ENCODE measurements at regions of chr17 and their contacts with region 1.

Region 1: DNA sequence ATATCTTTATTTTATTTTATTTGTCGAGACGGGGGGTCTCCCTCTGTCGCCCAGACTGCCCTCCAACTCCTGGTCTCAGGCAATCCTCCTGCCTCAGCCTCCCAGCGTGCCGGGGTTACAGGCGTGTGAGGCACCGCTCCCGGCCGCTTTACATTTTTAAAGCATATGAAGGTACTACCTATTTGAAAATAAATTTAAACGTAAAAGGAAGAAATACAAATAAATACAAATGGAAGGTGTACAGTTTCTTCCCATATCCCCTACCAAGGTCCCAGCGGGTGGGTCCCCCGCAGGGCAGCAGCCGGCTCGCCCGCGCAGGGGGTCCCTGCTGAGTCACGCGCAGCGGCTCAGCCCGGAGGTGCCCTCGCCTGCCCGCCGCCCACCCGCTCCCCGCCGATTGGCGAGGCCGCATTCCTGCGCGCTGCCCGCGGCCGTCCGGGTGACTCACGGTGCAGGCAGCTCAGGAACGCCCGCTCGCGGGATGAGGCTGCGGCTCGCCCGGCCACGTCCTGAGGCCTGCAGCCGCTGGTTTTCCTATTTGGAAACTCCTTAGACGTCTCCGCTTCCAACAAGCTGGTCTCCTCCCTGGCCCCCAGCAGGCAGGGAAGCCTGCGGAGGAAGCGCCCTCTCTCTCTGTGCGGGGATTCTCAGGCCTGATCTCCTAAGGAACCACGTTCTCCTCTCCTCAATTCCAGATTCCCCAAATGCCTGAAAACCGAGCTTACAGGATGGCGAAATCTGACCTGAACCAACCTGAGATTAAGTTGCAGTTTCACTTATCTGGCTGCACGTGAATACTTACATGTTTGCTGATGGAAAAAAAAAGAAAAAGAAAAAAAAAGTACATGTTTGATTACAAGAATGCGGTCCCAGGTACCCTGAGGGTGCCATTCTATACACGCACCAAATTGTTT is 54.9 kb upstream of the MAP3K14 start:
- DNase-seq: peak; percentile 84 to 92
- H3K4me3 ChIP-seq: peak overlapping the region in 3 of 4 experiments; percentile 1 to 44 (median 14); a peak in 5 of 8 replicates
- H3K27ac ChIP-seq: peak overlapping the region; percentile 79
- H3K4me1 ChIP-seq: peaks cover 8 to 28% (median 16%) of the 10 kb centered on the region in 4 experiments
- H3K27me3 ChIP-seq: no peaks in the 10 kb centered on the region
- CTCF ChIP-seq: no peak
- EP300 ChIP-seq: 0 out of 3 replicates have a peak, but pooled peaks of 1 of the 2 experiments have one; percentile 45
- POLR2A ChIP-seq: peak; percentile 50 to 53; a peak in 2 of 3 replicates
- RAD21 ChIP-seq: no peak; a peak in 1 of 4 replicates

Region 2: DNA sequence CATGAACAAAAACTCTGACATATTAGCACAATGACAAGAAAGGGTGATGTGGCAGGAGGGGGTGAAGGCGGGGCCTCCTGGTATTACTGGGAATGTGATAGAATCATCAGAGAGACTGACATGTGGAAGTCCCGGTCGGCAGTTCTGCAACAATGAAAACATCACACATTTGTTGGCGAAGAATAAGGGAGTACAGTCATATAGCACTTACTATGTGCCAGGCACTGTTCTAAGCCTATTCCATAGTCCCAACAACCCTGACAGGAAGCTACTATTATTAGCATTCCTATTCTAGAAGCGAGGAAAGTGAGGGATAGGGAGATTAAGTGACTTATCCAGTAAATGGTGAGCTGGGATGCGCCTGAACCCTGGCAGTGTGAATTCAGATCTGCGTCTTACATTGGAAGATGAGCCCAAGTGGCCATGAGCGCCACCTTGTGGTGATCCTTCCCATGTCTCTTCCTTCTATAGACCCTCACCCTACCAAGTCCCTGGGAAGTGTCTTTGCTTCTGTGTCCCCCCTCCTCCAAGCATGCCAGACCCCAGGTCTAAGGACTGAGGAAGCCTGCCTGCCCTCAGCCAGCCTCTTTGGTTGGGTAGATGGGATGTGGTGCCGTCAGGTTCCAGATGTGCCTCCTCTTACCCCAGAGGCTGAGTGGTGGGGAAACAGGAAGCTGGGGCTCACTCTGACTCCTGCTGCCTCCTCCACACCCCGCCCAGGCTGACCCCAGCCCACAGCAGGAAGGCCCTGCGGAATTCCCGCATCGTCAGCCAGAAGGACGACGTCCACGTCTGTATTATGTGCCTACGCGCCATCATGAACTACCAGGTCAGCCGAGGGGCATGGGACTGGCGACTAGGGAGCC is 136.0 kb before region 1 on chr17:
- CTCF ChIA-PET with region 1: interaction called, 12 read pairs
- POLR2A ChIA-PET with region 1: interaction called, 3 read pairs
- DNase-seq: peak; percentile 80 to 92
- H3K4me3 ChIP-seq: 0 out of 8 replicates have a peak overlapping the region, but pooled peaks of 1 of the 4 experiments have one; percentile 12
- H3K27ac ChIP-seq: no peak overlapping the region
- H3K4me1 ChIP-seq: peaks cover 3 to 20% (median 10%) of the 10 kb centered on the region in 4 experiments
- H3K27me3 ChIP-seq: peaks cover 0 to 26% (median 12%) of the 10 kb centered on the region in 4 experiments; a peak in 6 of 7 replicates
- CTCF ChIP-seq: peak; percentile 81 to 95 (median 82)
- EP300 ChIP-seq: no peak
- POLR2A ChIP-seq: no peak
- RAD21 ChIP-seq: peak; percentile 47 to 63; a peak in 3 of 4 replicates

Region 3: GRCh38 chr17:45258981-45259380 is 112.7 kb before region 1 on chr17:
- CTCF ChIA-PET with region 1: no interaction called
- POLR2A ChIA-PET with region 1: no interaction called
- DNase-seq: no peak
- H3K4me3 ChIP-seq: no peak overlapping the region
- H3K27ac ChIP-seq: no peak overlapping the region
- H3K4me1 ChIP-seq: peaks cover 4 to 19% (median 13%) of the 10 kb centered on the region in 4 experiments
- H3K27me3 ChIP-seq: peaks cover 0 to 5% (median 2%) of the 10 kb centered on the region in 4 experiments; a peak in 3 of 7 replicates
- CTCF ChIP-seq: no peak
- EP300 ChIP-seq: no peak
- POLR2A ChIP-seq: no peak
- RAD21 ChIP-seq: no peak

Region 4: DNA sequence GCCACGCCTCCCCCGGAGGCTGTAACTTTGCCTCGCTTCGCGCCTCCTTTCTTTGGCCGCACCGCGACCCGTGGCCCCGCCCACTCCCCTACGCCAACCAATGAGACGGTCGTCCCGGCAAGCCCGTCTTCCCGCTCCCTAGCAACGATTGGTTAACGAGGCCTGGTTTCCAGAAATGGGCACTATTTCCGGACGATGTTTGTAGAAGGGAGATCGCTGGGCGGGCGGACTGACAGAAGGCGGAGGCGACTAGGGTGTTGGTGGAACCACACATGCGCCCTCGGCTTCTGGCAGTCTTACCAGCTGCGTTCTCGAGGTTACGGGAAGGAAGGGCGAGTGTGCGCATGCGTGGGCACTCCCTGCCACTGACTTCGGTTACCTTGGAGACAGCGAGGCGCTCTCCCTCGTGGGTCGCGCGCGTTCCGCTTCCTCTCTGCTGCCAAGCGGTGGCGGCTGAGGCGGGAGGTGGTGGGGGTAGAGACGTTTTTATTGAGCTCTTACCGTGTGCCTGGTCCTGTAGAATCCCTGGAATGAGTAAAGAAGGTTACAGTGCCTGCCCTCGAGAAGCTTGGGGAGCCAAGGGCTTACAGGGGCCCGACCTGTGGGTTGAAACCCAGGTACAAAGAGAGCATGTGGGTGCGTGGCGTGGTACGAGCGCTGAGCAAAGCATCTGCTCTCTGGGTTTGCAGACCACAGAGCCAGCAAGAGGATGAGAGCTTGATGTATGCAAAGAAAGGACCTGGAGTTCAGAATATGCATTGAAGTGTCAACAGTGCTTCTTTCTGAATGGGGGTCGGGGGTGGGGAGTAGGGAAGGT is 54.4 kb before region 1 on chr17:
- CTCF ChIA-PET with region 1: interaction called, 6 read pairs
- POLR2A ChIA-PET with region 1: interaction called, 15 read pairs
- DNase-seq: peak; percentile 99
- H3K4me3 ChIP-seq: peak overlapping the region; percentile 49 to 84 (median 76)
- H3K27ac ChIP-seq: no peak overlapping the region; the same call in 1 of the 2 replicates
- H3K4me1 ChIP-seq: peaks cover 0 to 5% (median 3%) of the 10 kb centered on the region in 4 experiments; a peak in 6 of 7 replicates
- H3K27me3 ChIP-seq: peaks cover 0 to 2% (median 0%) of the 10 kb centered on the region in 4 experiments; a peak in 3 of 7 replicates
- CTCF ChIP-seq: no peak
- EP300 ChIP-seq: no peak
- POLR2A ChIP-seq: 0 out of 3 replicates have a peak, but pooled peaks of 1 of the 2 experiments have one; percentile 14
- RAD21 ChIP-seq: no peak; a peak in 1 of 4 replicates

Region 5: DNA sequence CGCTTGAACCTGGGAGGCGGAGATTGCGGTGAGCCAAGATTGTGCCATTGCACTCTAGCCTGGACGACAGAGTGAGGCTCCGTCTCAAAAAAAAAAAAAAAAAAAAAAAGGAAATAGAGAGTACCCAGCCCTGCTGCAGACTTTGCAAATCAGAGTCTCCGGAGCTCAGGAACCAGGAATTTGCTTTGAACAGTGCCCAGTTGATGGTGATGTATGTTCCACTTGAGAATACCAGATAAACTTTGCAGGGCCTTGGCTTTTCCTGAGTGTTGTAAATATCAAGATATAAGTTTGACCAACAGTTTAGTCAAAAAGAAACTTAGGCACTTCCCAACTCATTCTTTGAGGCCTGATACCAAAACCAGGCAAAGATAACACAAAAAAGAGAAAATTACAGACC is 24.2 kb before region 1 on chr17:
- CTCF ChIA-PET with region 1: no interaction called
- POLR2A ChIA-PET with region 1: no interaction called
- DNase-seq: no peak
- H3K4me3 ChIP-seq: no peak overlapping the region
- H3K27ac ChIP-seq: no peak overlapping the region
- H3K4me1 ChIP-seq: peaks cover 0 to 1% (median 0%) of the 10 kb centered on the region in 4 experiments; a peak in 2 of 7 replicates
- H3K27me3 ChIP-seq: no peaks in the 10 kb centered on the region
- CTCF ChIP-seq: no peak
- EP300 ChIP-seq: no peak
- POLR2A ChIP-seq: no peak
- RAD21 ChIP-seq: no peak

Region 6: DNA sequence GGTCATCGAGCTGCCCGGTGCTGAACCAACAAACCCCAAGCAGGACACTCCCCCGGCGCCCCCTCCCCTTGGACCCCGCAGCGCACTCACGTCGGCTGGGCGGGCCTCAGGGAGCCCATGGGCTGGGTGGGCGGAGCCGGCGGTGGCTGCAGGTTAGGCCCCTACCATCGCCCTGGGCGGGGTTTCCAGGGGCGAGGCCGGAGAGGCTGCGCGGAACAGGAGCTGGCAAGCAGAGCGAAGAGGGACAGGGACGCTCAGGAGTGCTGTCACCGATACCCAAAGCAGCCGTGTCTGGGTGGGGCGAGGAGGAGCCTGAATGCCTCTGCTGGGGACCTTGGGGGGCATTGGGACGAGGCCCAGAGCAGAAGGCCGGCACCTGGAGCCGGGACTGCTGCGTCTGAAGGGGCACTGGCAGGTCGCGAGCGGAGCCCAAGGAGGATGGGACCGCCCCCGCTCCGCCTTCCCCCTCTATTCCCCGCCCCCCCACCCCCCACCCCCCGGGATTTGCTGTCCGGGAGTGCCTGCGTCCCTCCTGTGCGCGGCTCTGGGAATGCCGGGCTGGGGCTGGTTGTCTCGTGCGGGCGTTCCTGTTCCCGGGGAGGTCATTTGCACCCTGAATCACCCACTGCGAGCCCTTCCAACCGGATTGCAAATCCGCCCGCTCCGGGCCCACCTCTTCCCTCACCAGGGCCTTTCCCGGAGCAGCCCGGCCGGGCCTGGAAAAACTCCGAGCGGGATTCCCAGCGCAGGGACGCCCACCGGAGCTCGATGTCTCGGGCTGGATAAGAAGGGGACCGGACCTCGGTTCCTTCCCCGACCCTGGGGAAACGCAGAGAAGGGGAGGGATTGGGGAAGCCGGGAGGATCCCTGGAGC is 60.1 kb after region 1 on chr17:
- CTCF ChIA-PET with region 1: no interaction called
- POLR2A ChIA-PET with region 1: no interaction called
- DNase-seq: peak; percentile 63 to 95
- H3K4me3 ChIP-seq: peak overlapping the region; percentile 54 to 65 (median 56)
- H3K27ac ChIP-seq: no peak overlapping the region
- H3K4me1 ChIP-seq: peaks cover 6 to 22% (median 14%) of the 10 kb centered on the region in 4 experiments
- H3K27me3 ChIP-seq: peaks cover 21 to 49% (median 43%) of the 10 kb centered on the region in 4 experiments
- CTCF ChIP-seq: no peak
- EP300 ChIP-seq: no peak
- POLR2A ChIP-seq: no peak
- RAD21 ChIP-seq: no peak